ENCODE measurements at regions of chr3 and their contacts with region 1.

Region 1: DNA sequence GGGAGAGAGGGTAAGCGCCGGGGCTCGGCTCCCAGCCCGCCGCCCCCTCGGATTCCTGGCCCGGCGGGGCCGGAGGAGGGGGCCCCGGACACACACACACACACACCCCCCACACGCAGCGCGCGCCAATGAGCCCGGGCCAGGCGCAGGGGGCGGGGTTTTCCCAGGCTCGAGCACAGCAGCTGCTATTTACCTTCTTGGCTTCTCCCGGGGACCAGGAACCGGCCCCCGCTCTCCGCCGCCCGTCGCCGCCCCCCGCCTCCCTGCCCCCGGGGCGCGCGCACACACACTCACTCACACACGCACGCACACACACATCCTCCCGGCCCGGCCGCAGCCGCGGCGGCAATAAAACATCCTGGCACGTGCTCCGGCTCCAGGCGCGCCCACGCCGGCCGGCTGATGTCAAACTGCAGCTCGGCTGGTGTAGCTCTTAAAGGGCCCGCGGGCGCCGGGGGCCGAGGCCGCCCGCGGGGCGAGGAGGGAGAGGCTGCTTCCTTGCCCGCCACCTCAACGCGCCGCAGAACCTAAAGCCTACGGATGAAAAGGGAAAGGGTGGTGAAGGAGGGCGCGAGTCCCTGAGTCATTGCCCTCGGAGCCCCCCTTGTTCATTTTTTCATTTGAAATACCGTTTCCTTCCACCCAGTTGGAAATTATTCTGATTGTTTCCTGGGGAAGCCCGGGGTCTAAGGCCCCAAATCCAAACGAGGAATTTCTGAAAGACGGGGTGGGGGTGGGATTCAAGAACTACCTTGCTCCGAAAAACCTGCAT is 1.0 kb upstream of the HES1 start:
- DNase-seq: peak; percentile 95
- H3K4me3 ChIP-seq: peak overlapping the region; percentile 60 to 71
- H3K27ac ChIP-seq: peak overlapping the region; percentile 97 to 98
- H3K4me1 ChIP-seq: peaks cover 4% of the 10 kb centered on the region
- H3K27me3 ChIP-seq: no peaks in the 10 kb centered on the region
- CTCF ChIP-seq: peak in 1 of 4 experiments; percentile 21
- POLR2A ChIP-seq: peak; percentile 37

Region 2: DNA sequence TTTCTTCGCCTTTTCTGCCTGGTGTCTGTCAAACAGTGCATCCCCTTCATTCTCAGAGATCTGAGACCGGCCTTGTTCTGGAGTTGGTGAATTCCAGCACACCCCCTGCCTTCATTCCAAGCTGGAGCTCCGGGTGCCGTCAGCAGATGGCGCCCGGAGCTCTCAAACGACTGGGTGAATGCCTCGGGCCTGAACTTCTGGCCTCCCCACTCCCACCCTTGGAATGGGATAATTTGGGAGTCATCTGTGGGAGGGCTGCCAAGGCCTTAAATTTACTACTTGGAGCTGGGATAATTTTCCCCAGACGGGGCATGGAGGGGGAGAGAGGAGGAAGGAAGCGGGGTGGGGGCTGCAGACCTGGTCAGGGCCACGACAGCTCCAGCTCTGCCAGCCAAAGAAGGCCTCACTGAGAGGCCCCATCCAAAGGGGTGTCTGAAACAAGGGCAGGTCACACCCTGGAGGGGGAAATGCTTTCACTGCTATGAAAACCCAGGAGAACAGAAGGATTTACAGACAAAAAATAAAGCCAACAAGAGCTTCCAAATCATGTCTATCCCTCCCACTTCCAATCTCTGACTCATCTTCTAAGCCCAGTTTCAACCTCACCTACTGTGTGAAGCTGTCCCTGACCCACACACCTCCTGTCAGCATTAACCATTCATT is 354.0 kb before region 1 on chr3:
- intact Hi-C with region 1: loop called (anchors 2 kb)
- DNase-seq: peak; percentile 59
- H3K4me3 ChIP-seq: no peak overlapping the region
- H3K27ac ChIP-seq: peak overlapping the region in 1 of 2 donors; percentile 10
- H3K4me1 ChIP-seq: no peaks in the 10 kb centered on the region
- H3K27me3 ChIP-seq: no peaks in the 10 kb centered on the region
- CTCF ChIP-seq: peak; percentile 79 to 86 (median 82)
- POLR2A ChIP-seq: no peak

Region 3: DNA sequence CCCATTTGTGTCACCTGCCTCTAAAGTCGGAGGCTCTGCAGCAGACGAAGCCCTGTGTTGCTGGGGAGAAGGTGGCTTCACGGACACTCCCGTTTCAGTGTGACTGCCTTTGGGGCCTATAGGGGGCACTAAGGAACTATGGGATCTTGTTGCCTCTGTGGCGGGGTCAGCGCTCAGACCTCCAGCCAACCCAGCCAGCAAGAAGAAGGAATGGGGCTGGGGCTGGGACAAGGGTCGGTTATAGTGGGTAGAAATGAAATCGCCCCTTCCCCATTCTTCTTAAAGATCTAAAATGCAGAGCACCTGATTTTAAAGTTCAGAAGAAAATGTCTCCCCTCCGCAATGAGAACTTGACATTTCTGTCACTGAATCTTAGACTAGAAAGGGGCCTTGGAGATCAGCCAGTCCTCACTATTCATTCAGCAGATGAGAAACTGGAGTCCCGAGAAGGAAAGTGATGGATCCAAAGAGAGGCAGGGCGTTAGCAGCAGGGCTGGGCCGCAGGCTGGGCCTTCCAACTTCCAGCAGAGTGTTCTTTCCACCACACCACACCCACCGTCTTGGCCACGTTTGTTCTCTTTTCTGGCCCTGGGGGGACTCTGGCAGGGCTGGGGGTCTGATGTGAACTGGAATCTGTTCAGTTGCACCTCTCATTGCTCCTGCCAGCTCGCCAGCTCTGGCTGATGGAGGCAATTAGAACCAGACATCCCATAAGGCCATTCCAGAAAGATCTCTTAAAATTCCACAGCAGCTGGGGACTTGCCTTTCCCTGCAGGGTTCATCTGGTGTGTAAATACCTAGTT is 346.6 kb before region 1 on chr3:
- intact Hi-C with region 1: loop called (anchors 2 kb)
- DNase-seq: peak; percentile 49
- H3K4me3 ChIP-seq: no peak overlapping the region
- H3K27ac ChIP-seq: no peak overlapping the region
- H3K4me1 ChIP-seq: peaks cover 4% of the 10 kb centered on the region
- H3K27me3 ChIP-seq: no peaks in the 10 kb centered on the region
- CTCF ChIP-seq: peak; percentile 13 to 66 (median 62)
- POLR2A ChIP-seq: no peak

Region 4: GRCh38 chr3:194003125-194004057 is 131.6 kb before region 1 on chr3:
- intact Hi-C with region 1: loop called (anchors 2 kb)
- DNase-seq: peak; percentile 83
- H3K4me3 ChIP-seq: peak overlapping the region; percentile 23 to 31
- H3K27ac ChIP-seq: peak overlapping the region; percentile 78
- H3K4me1 ChIP-seq: peaks cover 7% of the 10 kb centered on the region
- H3K27me3 ChIP-seq: no peaks in the 10 kb centered on the region
- CTCF ChIP-seq: peak in 1 of 4 experiments; percentile 5
- POLR2A ChIP-seq: peak; percentile 10

Region 5: DNA sequence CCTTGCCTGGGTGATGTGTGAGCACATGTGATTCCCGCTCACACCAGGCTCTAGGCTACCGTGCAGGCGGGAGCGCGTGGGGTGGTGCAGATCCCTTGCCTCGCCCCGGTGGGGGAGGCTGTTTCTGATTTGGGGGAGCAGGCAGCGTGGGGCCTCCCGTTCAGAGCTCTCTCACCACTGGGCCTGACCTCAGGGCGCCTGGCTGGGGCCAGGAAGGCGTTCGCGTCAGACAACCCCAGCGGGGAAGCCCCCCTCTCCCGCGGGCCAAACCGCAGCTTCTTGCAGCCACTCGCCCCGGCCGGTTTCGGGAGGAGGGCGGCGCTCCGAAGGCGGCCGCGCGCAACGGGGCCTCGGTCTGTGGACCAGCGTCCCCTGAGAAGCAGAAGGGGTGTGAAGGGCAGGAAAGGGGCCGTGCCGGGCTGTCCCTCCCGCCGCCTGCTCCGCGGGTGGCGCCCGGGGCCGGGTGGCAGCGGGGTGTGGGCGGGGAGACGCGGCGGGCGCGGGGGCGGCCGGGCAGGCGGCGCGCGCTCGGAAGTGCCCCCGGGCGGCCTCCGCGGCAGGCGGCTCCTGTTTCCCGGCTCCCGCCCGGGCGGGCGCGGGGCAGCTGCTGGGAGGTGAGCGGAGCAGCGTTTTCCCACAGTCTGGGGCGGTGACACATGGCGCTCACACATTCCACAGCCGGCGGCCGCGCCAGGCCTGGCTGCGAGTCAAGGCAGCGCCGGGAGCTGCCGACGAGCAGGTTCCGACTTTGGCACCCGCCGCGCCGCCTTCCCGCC is 64.1 kb before region 1 on chr3:
- intact Hi-C with region 1: loop called (anchors 5 kb)
- DNase-seq: peak; percentile 89
- H3K4me3 ChIP-seq: peak overlapping the region; percentile 46
- H3K27ac ChIP-seq: peak overlapping the region; percentile 67 to 80
- H3K4me1 ChIP-seq: no peaks in the 10 kb centered on the region
- H3K27me3 ChIP-seq: no peaks in the 10 kb centered on the region
- CTCF ChIP-seq: peak in 2 of 4 experiments; percentile 25 to 29
- POLR2A ChIP-seq: no peak

Measured in prostate gland (tissue), 2 donors.